ENCODE measurements at regions of chr18 and their contacts with region 1.

Region 1: DNA sequence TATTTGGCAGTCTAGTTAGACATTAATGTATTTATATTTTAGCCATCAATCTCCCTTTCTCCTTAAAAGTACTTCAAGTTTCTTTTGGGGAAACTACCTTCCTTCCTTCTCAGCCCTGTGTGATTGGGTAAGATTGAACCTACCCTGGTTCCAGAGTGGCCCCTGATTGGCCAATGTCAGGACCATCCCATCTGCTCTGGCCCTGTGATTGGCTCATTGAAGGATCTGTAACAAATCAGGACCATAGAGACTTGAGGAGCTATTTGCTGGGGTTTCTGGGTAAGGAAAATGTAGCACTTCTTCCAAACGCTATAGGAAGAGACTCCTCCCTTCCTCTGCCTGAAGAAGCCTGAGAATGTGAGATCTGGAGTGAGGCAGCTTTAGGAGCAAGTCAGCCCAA is 59.3 kb downstream of the AQP4 start:
- DNase-seq: no peak
- ATAC-seq: no peak

Region 2: DNA sequence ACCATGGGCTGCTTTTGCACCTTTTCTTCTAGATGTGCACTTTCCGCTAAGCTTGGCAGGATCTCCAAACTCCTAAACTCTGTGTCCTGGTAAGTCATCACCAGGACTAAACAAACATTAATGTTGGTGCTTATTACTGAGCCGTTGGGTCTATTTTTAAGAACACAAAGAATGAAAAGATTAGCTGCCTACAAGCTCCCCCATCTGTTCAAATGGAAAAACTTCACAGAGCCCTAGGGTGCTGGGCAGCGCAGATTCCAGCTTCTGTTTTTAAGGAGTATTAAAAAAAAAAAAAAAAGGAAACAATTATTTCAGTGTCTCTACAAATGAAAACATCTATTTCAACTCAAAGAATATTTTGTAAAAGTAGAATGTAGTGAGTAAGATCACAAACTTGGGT is 157.1 kb after region 1 on chr18:
- intact Hi-C with region 1: loop called (anchors 5 kb)
- DNase-seq: no peak
- ATAC-seq: peak; percentile 74

Region 3: GRCh38 chr18:27005589-27005988 is 199.4 kb after region 1 on chr18:
- intact Hi-C with region 1: loop called (anchors 5 kb)
- DNase-seq: no peak
- ATAC-seq: peak; percentile 59

Measured in Right ventricle myocardium superior (tissue), 1 donor.